Activated CD4-positive, alpha-beta memory T cell treated with anti-CD3 and anti-CD28 coated beads for 36 hours (primary cell): ENCODE measurements at regions of chr1 and their contacts with region 1.

Region 1: DNA sequence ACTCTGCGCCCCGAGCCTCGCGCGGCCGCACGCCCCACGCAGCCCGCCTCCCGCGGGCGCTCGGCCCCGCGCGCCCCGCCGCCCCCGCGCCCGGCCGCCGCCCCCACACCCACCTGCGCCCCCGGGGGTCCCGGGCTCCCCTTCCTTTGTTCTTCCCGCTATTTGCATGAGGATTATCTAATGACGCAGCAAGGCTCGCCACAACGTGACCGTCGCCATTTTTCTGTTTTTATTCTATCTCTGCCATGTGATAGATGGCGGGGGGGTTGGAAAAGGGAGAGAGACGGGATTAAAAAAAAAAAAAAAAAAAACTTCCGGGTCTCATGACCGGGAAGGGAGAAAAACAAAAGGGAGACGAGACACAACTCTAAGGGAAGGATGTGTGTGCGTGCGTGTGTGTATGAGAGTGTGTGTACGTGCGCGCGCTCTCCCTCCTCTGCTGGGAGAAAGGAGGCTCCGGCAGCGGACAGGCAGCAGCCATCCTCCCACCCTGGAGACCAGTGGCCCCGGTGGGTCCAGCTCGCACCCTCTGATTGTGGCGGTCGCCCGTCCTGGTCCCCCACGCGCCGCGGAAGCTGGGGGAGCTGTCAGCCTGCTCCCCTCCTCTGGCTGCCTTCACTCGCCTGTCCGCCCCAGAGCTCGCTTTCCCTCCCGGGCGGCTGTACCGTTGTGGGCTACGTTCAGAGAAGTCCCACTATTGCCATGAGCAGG is 80.4 kb upstream of the AK4 start:
- DNase-seq: peak; percentile 66
- H3K4me3 Mint-ChIP-seq: peak overlapping the region; percentile 87
- H3K27ac Mint-ChIP-seq: peak overlapping the region; percentile 93
- H3K4me1 Mint-ChIP-seq: peaks cover 53% of the 10 kb centered on the region
- H3K27me3 Mint-ChIP-seq: no peaks in the 10 kb centered on the region

Region 2: DNA sequence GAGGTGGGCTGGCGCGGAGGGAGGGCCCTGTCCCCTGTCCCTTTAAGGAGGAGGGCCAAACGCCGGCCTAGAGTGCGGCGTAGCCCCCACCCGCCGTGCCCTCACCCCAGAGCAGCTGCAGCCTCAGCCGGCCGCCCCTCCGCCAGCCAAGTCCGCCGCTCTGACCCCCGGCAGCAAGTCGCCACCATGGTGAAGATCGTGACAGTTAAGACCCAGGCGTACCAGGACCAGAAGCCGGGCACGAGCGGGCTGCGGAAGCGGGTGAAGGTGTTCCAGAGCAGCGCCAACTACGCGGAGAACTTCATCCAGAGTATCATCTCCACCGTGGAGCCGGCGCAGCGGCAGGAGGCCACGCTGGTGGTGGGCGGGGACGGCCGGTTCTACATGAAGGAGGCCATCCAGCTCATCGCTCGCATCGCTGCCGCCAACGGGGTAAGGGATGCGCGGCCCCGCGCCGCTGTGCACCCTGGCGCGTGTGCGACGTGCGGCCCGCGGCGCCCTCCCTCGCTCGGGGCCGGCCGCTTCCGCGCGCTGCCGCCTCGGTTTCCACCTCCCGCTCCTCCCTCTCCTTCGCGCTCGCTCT is 1474.3 kb before region 1 on chr1 and contains the start of gene PGM1:
- CTCF ChIA-PET with region 1: no interaction called
- POLR2A ChIA-PET with region 1: no interaction called
- intact Hi-C with region 1: loop called (anchors 5 kb)
- DNase-seq: peak; percentile 84
- H3K4me3 Mint-ChIP-seq: peak within 1 kb of the TSS; percentile 95
- H3K27ac Mint-ChIP-seq: peak within 1 kb of the TSS; percentile 98
- H3K4me1 Mint-ChIP-seq: peaks cover 28% of the 10 kb centered on the region
- H3K27me3 Mint-ChIP-seq: no peaks in the 10 kb centered on the region
- total RNA-seq, gene PGM1: 31.9 to 32.4 TPM

Region 3: DNA sequence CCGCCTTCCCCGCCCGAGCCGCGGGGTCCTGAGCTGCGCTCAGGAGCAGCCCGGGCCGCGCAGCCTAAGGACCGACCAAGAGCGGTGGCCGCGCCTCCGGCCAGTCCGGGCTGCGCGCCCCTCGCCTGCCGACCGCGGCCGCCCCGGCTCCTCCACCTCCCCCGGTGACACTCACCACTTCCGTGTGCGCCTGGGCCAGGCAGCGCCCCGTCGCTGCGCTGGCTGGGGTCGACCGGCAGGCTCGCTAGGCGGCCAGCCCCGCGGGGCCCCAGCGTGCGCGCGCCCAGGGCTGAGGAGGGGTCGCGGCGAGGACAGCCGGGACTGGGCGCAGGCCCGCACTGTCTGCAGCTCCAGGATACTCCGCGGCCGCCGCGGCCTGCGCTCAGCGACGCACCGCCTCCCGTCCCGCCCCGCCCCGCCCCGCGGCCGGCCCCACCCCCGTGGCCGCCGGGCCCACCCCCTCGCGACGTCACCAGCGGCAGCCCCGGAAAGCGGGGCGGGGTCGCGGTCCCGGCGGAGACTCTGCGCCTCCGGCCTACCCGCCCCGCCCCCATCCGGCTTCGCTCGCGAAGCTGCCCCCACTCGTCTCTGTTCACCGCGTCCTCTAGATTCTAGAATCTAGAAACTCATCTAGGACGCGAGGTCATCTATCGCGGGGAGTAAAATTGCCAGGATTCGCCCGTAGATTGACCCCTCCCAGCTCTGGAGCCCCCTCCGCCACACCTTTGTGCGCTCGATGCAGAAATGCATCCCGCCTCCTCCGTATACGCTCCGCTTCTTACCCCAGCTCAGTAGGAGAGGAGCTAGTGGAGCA is 101.3 kb before region 1 on chr1 and contains the start of gene JAK1:
- CTCF ChIA-PET with region 1: interaction called, 3 read pairs
- POLR2A ChIA-PET with region 1: interaction called, 5 read pairs
- intact Hi-C with region 1: loop called (anchors 2 kb)
- DNase-seq: peak; percentile 89
- H3K4me3 Mint-ChIP-seq: peak within 1 kb of the TSS; percentile 91
- H3K27ac Mint-ChIP-seq: peak within 1 kb of the TSS; percentile 72
- H3K4me1 Mint-ChIP-seq: peaks cover 48% of the 10 kb centered on the region
- H3K27me3 Mint-ChIP-seq: no peaks in the 10 kb centered on the region
- total RNA-seq, gene JAK1: 115 to 128 TPM

Region 4: GRCh38 chr1:65393347-65393746 is 325.7 kb after region 1 on chr1:
- CTCF ChIA-PET with region 1: no interaction called
- POLR2A ChIA-PET with region 1: no interaction called
- intact Hi-C with region 1: loop called (anchors 10 kb)
- DNase-seq: peak; percentile 57
- H3K4me3 Mint-ChIP-seq: no peak overlapping the region
- H3K27ac Mint-ChIP-seq: peak overlapping the region; percentile 69
- H3K4me1 Mint-ChIP-seq: peaks cover 57% of the 10 kb centered on the region
- H3K27me3 Mint-ChIP-seq: no peaks in the 10 kb centered on the region

Region 5: DNA sequence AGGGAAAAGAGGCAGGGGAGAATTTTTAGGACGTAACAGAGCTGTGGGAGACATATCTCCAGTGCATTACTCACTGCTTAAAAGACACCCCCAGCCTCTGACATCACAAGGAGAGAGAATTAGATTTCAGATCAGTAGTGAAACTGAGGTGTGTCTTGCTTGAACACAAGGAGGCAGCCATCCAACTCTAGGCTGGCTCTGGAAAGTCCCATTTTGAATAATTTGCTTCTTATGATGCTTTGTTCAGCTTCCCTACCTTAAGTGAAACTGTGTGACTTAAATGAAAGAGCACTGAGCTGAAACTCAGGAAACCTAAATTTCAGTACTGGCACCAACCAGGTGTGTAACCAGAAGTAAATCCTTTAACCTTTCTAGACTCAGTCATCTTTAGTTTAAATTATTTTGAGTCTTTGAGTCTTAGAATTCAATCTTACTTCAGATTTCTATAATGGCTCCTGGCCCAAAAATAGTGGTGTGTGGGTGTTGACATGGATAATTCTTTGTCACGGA is 1214.8 kb after region 1 on chr1:
- CTCF ChIA-PET with region 1: no interaction called
- POLR2A ChIA-PET with region 1: no interaction called
- intact Hi-C with region 1: loop called (anchors 2 kb)
- DNase-seq: peak; percentile 80
- H3K4me3 Mint-ChIP-seq: no peak overlapping the region
- H3K27ac Mint-ChIP-seq: peak overlapping the region; percentile 76
- H3K4me1 Mint-ChIP-seq: peaks cover 87% of the 10 kb centered on the region
- H3K27me3 Mint-ChIP-seq: no peaks in the 10 kb centered on the region